Head of caudate nucleus (tissue), 42 donors: ENCODE measurements at regions of chr18 and their contacts with region 1.

Region 1: DNA sequence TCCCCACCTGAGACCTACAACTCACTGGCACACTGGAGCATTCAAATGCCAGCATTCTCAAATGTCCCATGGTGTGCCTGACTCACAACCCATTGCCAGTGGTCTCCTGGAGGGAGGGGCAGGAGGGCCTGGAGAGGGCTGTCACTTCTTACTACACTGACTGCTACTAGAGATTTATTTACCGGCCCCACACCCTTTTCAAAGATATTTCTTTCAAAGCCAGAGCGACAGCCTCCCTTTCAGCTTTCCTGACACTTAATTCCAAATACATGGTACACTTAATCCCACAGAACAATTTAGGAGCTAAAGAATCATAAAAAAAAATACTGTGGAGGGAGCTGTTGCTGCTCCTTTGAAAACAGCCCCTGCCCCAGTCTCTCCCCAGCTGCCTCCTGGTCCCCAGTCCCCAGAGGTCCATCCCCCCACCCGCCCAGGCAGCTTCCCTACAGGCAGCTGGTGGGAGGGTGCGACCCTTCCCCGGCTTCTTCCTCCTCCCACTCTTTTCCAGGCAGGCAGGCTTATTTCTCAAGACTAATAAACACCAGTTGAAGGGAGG is 129.1 kb upstream of the SMAD2 start:
- DNase-seq: peak in 1 of 42 donors; percentile 21

Region 2: DNA sequence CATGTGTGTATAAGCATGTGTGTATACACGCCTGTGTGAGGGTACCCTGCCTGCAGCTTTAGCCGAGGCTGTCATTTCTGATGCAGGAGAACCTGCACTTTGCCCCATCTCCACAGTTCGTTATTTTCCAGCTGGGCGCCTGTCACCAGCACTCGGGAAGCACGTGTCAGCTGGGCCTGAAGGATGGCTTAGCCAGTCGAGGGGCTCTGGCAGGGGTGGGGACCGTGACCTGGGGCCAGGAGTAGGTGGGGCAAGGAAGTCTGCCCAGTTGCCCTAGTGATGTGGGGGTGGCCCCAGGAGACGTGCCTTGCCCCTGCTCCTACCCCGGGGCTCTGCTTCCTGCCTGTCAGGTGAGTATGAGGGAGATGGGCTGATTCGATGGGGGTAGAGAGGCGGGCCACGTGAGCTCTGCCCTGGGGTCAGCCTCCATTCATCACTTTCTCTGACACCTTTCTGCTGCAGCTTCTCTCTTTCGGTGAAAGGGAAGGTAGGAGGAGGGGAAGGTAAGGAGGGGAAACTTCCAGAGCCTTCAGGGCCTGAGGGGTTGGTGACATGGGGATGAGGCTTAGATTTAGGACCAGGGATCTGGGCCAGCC is 677.5 kb before region 1 on chr18:
- intact Hi-C with region 1: loop called (anchors 10 kb)
- DNase-seq: no peak